Calu3 (cell line): ENCODE measurements at regions of chr11 and their contacts with region 1.

Region 1: GRCh38 chr11:73625696-73626318 is 20.6 kb upstream of the PLEKHB1 start:
- DNase-seq: peak; percentile 84
- H3K4me3 Mint-ChIP-seq: peak overlapping the region; percentile 24
- H3K27ac Mint-ChIP-seq: no peak overlapping the region
- H3K4me1 Mint-ChIP-seq: no peaks in the 10 kb centered on the region
- H3K27me3 Mint-ChIP-seq: peaks cover 33% of the 10 kb centered on the region
- CTCF ChIP-seq: peak; percentile 78

Region 2: GRCh38 chr11:73536961-73537360 is 88.8 kb before region 1 on chr11:
- CTCF ChIA-PET with region 1: no interaction called
- intact Hi-C with region 1: no loop called
- DNase-seq: no peak
- H3K4me3 Mint-ChIP-seq: no peak overlapping the region
- H3K27ac Mint-ChIP-seq: no peak overlapping the region
- H3K4me1 Mint-ChIP-seq: no peaks in the 10 kb centered on the region
- H3K27me3 Mint-ChIP-seq: no peaks in the 10 kb centered on the region
- CTCF ChIP-seq: no peak

Region 3: GRCh38 chr11:73661035-73661628 is 35.3 kb after region 1 on chr11:
- CTCF ChIA-PET with region 1: interaction called, 74 read pairs
- intact Hi-C with region 1: loop called (anchors 1 kb)
- DNase-seq: peak; percentile 82
- H3K4me3 Mint-ChIP-seq: no peak overlapping the region
- H3K27ac Mint-ChIP-seq: no peak overlapping the region
- H3K4me1 Mint-ChIP-seq: peaks cover 23% of the 10 kb centered on the region
- H3K27me3 Mint-ChIP-seq: no peaks in the 10 kb centered on the region
- CTCF ChIP-seq: peak; percentile 80

Region 4: GRCh38 chr11:73931039-73931645 is 305.3 kb after region 1 on chr11:
- CTCF ChIA-PET with region 1: interaction called, 12 read pairs
- intact Hi-C with region 1: loop called (anchors 5 kb)
- DNase-seq: peak; percentile 42
- H3K4me3 Mint-ChIP-seq: no peak overlapping the region
- H3K27ac Mint-ChIP-seq: no peak overlapping the region
- H3K4me1 Mint-ChIP-seq: no peaks in the 10 kb centered on the region
- H3K27me3 Mint-ChIP-seq: no peaks in the 10 kb centered on the region
- CTCF ChIP-seq: peak; percentile 27